ENCODE measurements at regions of chr14 and their contacts with region 1.

Region 1: DNA sequence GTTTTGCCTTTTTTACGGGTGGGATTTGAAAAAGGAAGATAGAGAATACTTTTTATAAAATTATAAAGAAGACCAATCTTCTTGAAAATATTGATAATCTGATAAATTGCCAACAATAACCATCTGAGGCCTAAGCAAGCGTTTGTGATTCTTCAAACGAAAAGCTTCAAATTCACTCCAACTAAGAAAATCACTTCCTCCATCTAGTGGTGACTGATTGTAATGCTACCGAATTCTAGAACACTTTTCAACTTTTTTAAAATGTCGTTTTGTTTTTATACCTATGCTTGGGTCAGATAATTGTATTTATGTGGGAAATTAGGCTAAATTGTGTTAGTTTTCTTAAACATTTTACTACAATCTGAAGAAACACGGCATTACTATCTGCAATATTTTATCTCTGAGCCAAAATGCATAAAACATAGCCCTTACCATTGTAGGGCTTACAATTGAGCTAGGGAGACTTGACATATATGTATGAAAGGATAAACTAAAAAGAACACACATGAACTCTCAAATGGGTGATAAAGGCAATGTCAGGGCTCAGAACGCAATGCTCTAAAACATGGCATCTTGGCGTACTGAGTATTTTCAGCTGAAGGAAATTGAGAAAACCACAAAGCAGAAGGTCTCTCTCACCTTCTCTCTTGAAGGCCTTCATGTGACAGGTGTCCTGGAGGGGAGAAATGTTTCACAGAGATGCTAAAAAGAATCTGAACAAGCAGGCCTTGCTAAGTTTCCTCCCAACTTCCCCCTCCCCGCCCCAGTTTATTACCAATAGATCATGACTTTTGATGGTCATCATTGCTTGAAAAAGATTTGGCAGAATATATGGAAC is 36.8 kb upstream of the G2E3 start:
- DNase-seq: no peak
- ATAC-seq: no peak

Region 2: GRCh38 chr14:30375296-30375892 is 146.7 kb before region 1 on chr14:
- intact Hi-C with region 1: loop called (anchors 5 kb)
- DNase-seq: peak; percentile 56
- ATAC-seq: peak; percentile 31

Region 3: GRCh38 chr14:30426463-30426862 is 95.7 kb before region 1 on chr14:
- intact Hi-C with region 1: no loop called
- DNase-seq: no peak
- ATAC-seq: no peak

Region 4: DNA sequence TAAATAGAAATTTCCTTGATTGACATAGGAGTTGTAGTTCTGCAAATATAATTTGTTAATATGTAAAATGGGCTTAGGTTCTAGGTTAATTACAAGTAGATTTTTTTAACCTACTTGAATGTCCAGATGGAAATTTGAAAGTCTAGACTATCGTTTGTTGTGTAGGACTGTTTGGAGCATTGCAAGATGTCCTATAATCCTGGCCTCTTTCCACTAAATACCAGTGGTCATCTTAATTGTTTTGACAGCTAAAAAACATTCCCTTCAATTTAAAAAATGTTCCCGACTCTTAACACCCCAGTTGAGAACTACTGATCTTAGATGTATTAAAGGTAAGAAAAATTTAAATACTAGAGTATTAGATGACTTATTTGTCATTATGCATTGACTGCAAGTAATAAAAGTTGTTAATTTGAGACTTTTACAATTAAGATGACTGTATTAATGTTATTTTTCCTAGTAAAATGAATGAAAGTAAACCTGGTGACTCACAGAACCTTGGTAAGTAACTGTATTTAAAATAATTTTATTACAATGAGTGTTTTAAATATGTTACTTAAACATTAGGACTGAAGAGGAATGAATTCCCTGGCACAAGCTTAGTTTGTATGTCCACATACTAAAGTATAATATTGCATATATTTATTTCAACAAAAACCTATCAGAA is 58.6 kb after region 1 on chr14:
- intact Hi-C with region 1: no loop called
- DNase-seq: no peak
- ATAC-seq: no peak

Measured in Right ventricle myocardium inferior (tissue), 1 donor.